Endothelial cell of umbilical vein (primary cell): ENCODE measurements at regions of chr11 and their contacts with region 1.

Region 1: DNA sequence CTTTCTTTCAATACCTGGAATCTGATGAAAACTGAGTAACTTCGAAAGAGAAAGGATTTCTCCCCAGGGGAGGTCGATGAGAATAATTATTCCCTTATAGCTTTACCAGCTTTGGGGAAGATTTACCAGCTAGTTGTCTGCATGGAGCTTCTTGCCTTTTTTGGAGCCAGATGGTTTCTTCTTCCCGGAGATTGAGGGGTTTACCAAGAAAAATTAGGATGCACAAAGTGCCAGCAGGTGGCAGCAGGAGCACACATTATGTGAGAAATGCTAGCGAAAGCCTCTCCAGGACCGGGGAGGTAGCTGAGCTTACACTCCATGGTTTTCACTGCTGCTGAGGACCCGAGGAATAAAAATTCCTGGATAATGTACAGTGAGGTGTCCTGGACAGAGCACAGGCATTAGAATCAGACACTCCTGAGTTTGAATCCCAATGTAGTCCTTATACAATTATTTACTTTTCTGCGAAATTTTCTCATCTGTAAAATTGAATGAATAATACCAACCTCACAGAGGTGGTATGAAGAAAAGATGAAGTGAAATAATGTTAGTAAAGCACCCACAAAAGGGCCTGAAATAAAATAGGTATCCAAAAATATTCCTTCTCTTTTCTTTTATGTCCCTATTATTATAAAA is 46.0 kb upstream of the PARVA start:
- DNase-seq: peak; percentile 82
- H3K4me3 ChIP-seq: no peak overlapping the region
- H3K27ac ChIP-seq: no peak overlapping the region
- H3K4me1 ChIP-seq: no peaks in the 10 kb centered on the region
- H3K27me3 ChIP-seq: no peaks in the 10 kb centered on the region
- CTCF ChIP-seq: peak; percentile 61 to 70
- POLR2A ChIP-seq: no peak

Region 2: GRCh38 chr11:12258451-12258850 is 72.9 kb before region 1 on chr11:
- CTCF ChIA-PET with region 1: no interaction called
- POLR2A ChIA-PET with region 1: no interaction called
- dilution Hi-C with region 1: no loop called
- intact Hi-C with region 1: no loop called
- DNase-seq: no peak
- H3K4me3 ChIP-seq: no peak overlapping the region
- H3K27ac ChIP-seq: no peak overlapping the region
- H3K4me1 ChIP-seq: no peaks in the 10 kb centered on the region
- H3K27me3 ChIP-seq: no peaks in the 10 kb centered on the region
- CTCF ChIP-seq: no peak
- POLR2A ChIP-seq: no peak

Region 3: DNA sequence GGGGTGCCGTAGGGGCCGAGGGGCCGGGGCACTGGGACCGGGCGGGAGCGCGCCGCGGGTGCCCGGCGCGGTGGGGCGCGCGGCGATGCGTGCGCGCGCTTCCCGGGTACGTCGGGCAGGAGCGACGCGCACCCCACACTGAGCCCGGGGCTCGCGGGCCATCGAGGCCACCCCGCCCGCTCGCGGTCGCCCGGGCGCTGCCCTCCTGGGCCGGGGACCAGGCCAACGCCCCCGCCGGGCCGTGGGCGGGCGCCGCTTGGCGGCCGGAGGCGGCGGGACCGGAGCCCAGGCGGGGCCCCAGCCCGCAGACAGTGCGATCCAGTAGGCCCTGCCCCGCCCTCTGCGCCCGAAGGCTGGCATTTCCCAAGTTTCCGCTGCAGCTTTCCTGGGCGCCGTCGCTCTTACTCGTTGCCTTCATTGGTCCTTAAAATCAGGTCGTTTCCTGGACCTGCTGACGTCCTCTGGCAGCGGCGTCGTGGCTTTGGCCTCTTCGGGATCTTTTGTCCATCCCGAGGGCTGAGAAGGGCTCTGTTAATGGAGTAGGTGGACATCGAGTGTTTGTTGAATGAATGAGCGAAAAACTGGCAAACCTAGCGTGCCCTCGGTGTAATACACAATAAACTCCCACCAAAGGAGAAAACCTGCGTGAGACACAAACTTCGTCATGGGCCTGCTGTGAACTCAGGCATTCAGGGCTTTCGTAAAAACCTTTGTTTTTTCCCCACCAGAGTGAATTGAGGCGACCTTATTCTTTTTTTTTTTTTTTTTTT is 46.7 kb after region 1 on chr11:
- CTCF ChIA-PET with region 1: interaction called, 22 read pairs
- POLR2A ChIA-PET with region 1: no interaction called
- dilution Hi-C with region 1: no loop called
- intact Hi-C with region 1: loop called (anchors 2 kb)
- DNase-seq: peak; percentile 69
- H3K4me3 ChIP-seq: peak overlapping the region; percentile 72 to 82 (median 78)
- H3K27ac ChIP-seq: peak overlapping the region; percentile 95
- H3K4me1 ChIP-seq: peaks cover 16% of the 10 kb centered on the region
- H3K27me3 ChIP-seq: no peaks in the 10 kb centered on the region
- CTCF ChIP-seq: peak; percentile 12 to 23
- POLR2A ChIP-seq: no peak

Region 4: GRCh38 chr11:12494699-12495098 is 163.3 kb after region 1 on chr11:
- CTCF ChIA-PET with region 1: interaction called, 10 read pairs
- POLR2A ChIA-PET with region 1: no interaction called
- dilution Hi-C with region 1: no loop called
- intact Hi-C with region 1: no loop called
- DNase-seq: no peak
- H3K4me3 ChIP-seq: no peak overlapping the region
- H3K27ac ChIP-seq: no peak overlapping the region
- H3K4me1 ChIP-seq: no peaks in the 10 kb centered on the region
- H3K27me3 ChIP-seq: no peaks in the 10 kb centered on the region
- CTCF ChIP-seq: no peak
- POLR2A ChIP-seq: no peak

Region 5: DNA sequence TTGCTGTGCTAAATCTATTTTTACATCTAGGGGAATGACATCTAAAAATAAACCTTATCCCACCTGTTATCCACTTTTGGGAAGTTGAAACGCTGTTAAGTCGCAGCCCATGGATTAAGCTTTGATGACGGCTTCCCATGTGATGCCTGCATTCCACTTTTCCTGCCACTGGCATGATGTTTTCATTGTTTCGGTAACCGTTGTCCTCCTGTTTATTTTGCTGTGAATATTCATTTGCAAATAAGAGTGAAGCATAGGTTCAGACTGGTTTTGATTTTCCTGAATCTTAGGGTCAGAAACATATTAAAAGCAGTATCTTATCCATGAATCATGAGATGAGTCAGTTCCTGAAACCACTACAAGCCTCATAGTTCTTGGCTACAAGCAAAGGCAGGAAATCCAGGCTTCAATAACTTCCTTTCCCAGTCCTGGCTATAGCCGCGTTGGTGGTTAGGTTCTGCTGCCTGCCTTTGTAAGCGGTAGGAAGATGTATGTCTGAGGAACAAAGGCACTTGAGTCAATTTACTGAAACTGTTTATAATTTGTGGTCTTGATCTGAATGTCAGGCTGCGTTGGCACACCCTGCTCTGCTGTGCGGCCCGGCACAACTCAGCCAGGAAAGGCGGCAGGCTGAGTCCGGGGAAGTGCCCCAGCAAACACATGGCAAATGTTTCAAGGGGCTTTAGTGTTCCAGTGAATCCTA is 362.3 kb after region 1 on chr11:
- CTCF ChIA-PET with region 1: interaction called, 3 read pairs
- POLR2A ChIA-PET with region 1: no interaction called
- dilution Hi-C with region 1: no loop called
- intact Hi-C with region 1: loop called (anchors 5 kb)
- DNase-seq: peak; percentile 99
- H3K4me3 ChIP-seq: peak overlapping the region in 1 of 3 experiments; percentile 28
- H3K27ac ChIP-seq: peak overlapping the region; percentile 95
- H3K4me1 ChIP-seq: peaks cover 54% of the 10 kb centered on the region
- H3K27me3 ChIP-seq: no peaks in the 10 kb centered on the region
- CTCF ChIP-seq: no peak
- POLR2A ChIP-seq: peak; percentile 28

Region 6: DNA sequence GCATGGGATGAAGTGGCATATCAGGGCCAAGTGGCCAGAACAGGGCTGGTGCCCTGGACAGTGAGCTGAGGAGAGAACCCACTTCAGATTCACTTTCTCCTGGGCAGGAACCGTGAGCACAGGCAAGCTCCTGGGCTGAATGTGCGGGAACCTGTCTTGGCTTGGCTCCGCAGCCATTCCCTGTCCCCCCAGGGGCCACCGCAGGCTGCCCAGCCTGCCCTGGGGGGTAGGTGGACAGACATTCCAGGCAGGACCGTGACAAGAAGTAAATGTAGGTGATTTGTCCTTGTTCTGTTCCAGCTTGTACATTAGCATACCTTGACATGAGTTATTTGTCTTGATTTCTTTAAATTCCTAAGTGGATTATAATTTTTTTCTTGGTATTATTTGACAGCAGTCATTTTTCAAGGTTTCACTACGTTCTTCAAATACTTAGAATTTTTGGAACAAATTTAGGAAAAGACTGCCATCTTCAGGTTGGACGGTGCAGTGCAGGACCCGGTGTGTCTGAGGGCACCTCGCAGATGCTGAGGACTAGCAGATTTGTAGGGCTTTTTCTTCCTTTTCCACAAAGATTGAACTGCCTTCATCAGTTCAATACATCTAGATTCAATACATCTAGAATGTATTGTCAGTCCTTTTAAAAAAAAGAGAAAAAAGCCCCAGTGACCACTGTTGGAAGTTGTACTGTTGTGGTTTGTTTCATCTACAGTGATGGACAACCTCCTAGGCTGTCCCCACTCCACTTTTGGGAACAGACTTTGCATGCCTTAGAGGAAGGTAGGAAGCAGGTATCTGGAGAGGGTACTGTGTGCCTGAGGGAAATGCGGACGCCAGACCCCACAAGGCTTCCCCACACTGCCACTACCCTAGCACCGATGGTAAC is 562.7 kb after region 1 on chr11:
- CTCF ChIA-PET with region 1: interaction called, 191 read pairs
- POLR2A ChIA-PET with region 1: no interaction called
- dilution Hi-C with region 1: no loop called
- intact Hi-C with region 1: loop called (anchors 1 kb)
- DNase-seq: peak; percentile 69
- H3K4me3 ChIP-seq: no peak overlapping the region
- H3K27ac ChIP-seq: no peak overlapping the region
- H3K4me1 ChIP-seq: no peaks in the 10 kb centered on the region
- H3K27me3 ChIP-seq: no peaks in the 10 kb centered on the region
- CTCF ChIP-seq: peak; percentile 72 to 96
- POLR2A ChIP-seq: no peak

Region 7: GRCh38 chr11:13183094-13183825 is 851.9 kb after region 1 on chr11:
- CTCF ChIA-PET with region 1: interaction called, 7 read pairs
- POLR2A ChIA-PET with region 1: no interaction called
- dilution Hi-C with region 1: no loop called
- intact Hi-C with region 1: loop called (anchors 5 kb)
- DNase-seq: peak; percentile 56
- H3K4me3 ChIP-seq: no peak overlapping the region
- H3K27ac ChIP-seq: no peak overlapping the region
- H3K4me1 ChIP-seq: peaks cover 6% of the 10 kb centered on the region
- H3K27me3 ChIP-seq: peaks cover 8 to 12% of the 10 kb centered on the region in 2 experiments
- CTCF ChIP-seq: peak; percentile 34 to 46
- POLR2A ChIP-seq: no peak